Endothelial cell of umbilical vein (primary cell): ENCODE measurements at regions of chr2 and their contacts with region 1.

Region 1: GRCh38 chr2:101746388-101746723 is 48.8 kb downstream of the MAP4K4 start:
- DNase-seq: peak; percentile 87
- H3K4me3 ChIP-seq: peak overlapping the region in 1 of 3 experiments; percentile 26
- H3K27ac ChIP-seq: peak overlapping the region; percentile 88
- H3K4me1 ChIP-seq: peaks cover 45% of the 10 kb centered on the region
- H3K27me3 ChIP-seq: no peaks in the 10 kb centered on the region
- CTCF ChIP-seq: no peak
- POLR2A ChIP-seq: no peak

Region 2: GRCh38 chr2:101412092-101412694 is 334.2 kb before region 1 on chr2:
- CTCF ChIA-PET with region 1: no interaction called
- POLR2A ChIA-PET with region 1: no interaction called
- dilution Hi-C with region 1: no loop called
- intact Hi-C with region 1: no loop called
- DNase-seq: no peak
- H3K4me3 ChIP-seq: no peak overlapping the region
- H3K27ac ChIP-seq: no peak overlapping the region
- H3K4me1 ChIP-seq: no peaks in the 10 kb centered on the region
- H3K27me3 ChIP-seq: peaks cover 0 to 10% of the 10 kb centered on the region in 2 experiments
- CTCF ChIP-seq: no peak
- POLR2A ChIP-seq: no peak

Region 3: GRCh38 chr2:101566632-101567228 is 179.6 kb before region 1 on chr2:
- CTCF ChIA-PET with region 1: no interaction called
- POLR2A ChIA-PET with region 1: no interaction called
- dilution Hi-C with region 1: no loop called
- intact Hi-C with region 1: no loop called
- DNase-seq: no peak
- H3K4me3 ChIP-seq: no peak overlapping the region
- H3K27ac ChIP-seq: no peak overlapping the region
- H3K4me1 ChIP-seq: no peaks in the 10 kb centered on the region
- H3K27me3 ChIP-seq: peaks cover 6 to 12% of the 10 kb centered on the region in 2 experiments
- CTCF ChIP-seq: no peak
- POLR2A ChIP-seq: no peak

Region 4: DNA sequence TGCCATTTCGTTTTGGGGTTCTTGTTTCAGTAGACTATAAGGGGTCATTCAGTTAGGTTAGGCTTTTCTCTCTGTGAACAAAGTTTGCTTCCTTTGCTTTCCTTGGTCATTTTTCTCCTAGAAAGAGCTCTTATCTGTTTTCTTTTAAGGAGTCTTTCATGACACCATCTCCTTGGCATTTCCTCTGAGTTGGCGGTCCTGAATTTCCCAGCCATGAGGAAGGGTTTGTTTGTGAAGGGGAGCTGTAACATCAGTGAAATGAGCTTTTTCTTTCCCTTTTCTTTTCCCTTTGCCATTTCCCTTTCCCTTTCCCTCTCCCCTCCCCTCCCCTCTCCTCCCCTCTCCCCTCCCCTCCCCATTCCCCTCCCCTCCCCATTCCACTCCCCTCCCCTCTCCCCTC is 12.8 kb after region 1 on chr2:
- CTCF ChIA-PET with region 1: interaction called, 24 read pairs
- POLR2A ChIA-PET with region 1: no interaction called
- dilution Hi-C with region 1: no loop called
- intact Hi-C with region 1: loop called (anchors 1 kb)
- DNase-seq: peak; percentile 95
- H3K4me3 ChIP-seq: no peak overlapping the region
- H3K27ac ChIP-seq: peak overlapping the region; percentile 73
- H3K4me1 ChIP-seq: peaks cover 41% of the 10 kb centered on the region
- H3K27me3 ChIP-seq: no peaks in the 10 kb centered on the region
- CTCF ChIP-seq: no peak
- POLR2A ChIP-seq: no peak

Region 5: DNA sequence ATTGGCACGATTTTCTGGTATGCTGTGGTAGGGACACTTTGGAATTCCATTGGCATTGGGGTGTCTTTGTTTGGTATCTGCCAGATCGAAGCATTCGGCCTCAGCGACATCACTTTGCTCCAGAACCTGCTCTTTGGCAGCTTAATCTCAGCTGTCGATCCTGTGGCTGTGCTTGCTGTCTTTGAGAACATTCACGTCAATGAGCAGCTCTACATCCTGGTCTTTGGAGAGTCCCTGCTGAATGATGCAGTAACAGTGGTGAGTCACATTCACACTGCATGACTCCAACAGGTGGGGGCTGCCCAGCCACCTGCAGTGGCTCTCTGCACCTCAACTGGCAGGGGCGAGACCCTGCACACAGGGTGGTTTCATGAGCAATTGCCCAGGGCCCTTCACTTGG is 911.4 kb after region 1 on chr2:
- CTCF ChIA-PET with region 1: no interaction called
- POLR2A ChIA-PET with region 1: no interaction called
- dilution Hi-C with region 1: no loop called
- intact Hi-C with region 1: no loop called
- DNase-seq: no peak
- H3K4me3 ChIP-seq: no peak overlapping the region
- H3K27ac ChIP-seq: no peak overlapping the region
- H3K4me1 ChIP-seq: no peaks in the 10 kb centered on the region
- H3K27me3 ChIP-seq: peaks cover 0 to 1% of the 10 kb centered on the region in 2 experiments
- CTCF ChIP-seq: no peak
- POLR2A ChIP-seq: no peak

Region 6: DNA sequence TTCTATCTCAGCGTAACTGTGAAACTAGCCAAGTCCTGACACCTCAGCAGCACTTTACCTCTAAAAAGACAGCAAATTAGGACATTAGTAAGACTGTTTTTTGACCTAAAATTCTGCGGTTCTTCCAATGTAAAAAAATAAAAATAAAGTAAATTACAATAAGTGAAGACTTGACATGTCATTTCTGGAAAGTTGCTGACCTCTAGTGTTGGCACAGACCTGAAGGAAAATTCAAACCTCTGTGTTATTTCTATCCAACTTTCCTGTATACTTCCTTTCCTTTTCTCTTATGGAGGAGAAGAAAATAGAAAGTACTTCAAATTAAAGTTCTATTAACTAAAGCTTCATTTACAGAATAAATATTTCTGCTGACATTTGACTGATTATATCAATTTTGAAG is 1126.0 kb after region 1 on chr2:
- CTCF ChIA-PET with region 1: no interaction called
- POLR2A ChIA-PET with region 1: no interaction called
- dilution Hi-C with region 1: no loop called
- intact Hi-C with region 1: no loop called
- DNase-seq: no peak
- H3K4me3 ChIP-seq: no peak overlapping the region
- H3K27ac ChIP-seq: no peak overlapping the region
- H3K4me1 ChIP-seq: no peaks in the 10 kb centered on the region
- H3K27me3 ChIP-seq: no peaks in the 10 kb centered on the region
- CTCF ChIP-seq: no peak
- POLR2A ChIP-seq: no peak